MCF 10A (cell line): ENCODE measurements at regions of chr2 and their contacts with region 1.

Region 1: DNA sequence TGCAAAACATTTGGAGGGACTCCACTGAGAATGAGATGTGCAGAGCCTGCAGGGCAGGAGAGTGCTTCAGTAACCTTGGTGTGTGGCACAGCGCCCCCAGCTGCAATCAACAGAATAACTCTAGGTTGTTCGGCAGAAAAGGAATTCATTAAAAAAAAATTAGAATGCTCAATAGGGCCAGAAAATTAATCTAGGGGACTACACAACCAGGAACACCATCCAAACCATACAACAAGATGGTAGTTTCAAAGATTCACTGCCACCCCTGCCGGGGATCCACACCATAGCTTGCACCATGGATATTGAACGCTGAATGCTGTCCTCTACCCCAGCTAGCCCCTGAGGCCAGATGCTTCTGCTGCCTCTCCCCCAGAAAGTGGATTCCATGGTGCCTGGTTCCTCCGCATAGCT is 50.1 kb downstream of the THUMPD2 start:
- DNase-seq: peak; percentile 43
- H3K4me3 Mint-ChIP-seq: no peak overlapping the region
- H3K27ac Mint-ChIP-seq: no peak overlapping the region
- H3K4me1 Mint-ChIP-seq: peaks cover 3% of the 10 kb centered on the region
- H3K27me3 Mint-ChIP-seq: no peaks in the 10 kb centered on the region
- CTCF ChIP-seq: peak; percentile 69

Region 2: GRCh38 chr2:39513641-39514094 is 215.3 kb before region 1 on chr2:
- CTCF ChIA-PET with region 1: interaction called, 22 read pairs
- POLR2A ChIA-PET with region 1: no interaction called
- intact Hi-C with region 1: loop called (anchors 1 kb)
- DNase-seq: peak; percentile 92
- H3K4me3 Mint-ChIP-seq: no peak overlapping the region
- H3K27ac Mint-ChIP-seq: peak overlapping the region; percentile 90
- H3K4me1 Mint-ChIP-seq: peaks cover 30% of the 10 kb centered on the region
- H3K27me3 Mint-ChIP-seq: no peaks in the 10 kb centered on the region
- CTCF ChIP-seq: peak; percentile 55

Region 3: GRCh38 chr2:39593439-39594393 is 135.2 kb before region 1 on chr2:
- CTCF ChIA-PET with region 1: interaction called, 18 read pairs
- POLR2A ChIA-PET with region 1: no interaction called
- intact Hi-C with region 1: no loop called
- DNase-seq: peak; percentile 74
- H3K4me3 Mint-ChIP-seq: no peak overlapping the region
- H3K27ac Mint-ChIP-seq: peak overlapping the region; percentile 63
- H3K4me1 Mint-ChIP-seq: peaks cover 9% of the 10 kb centered on the region
- H3K27me3 Mint-ChIP-seq: no peaks in the 10 kb centered on the region
- CTCF ChIP-seq: peak; percentile 36

Region 4: DNA sequence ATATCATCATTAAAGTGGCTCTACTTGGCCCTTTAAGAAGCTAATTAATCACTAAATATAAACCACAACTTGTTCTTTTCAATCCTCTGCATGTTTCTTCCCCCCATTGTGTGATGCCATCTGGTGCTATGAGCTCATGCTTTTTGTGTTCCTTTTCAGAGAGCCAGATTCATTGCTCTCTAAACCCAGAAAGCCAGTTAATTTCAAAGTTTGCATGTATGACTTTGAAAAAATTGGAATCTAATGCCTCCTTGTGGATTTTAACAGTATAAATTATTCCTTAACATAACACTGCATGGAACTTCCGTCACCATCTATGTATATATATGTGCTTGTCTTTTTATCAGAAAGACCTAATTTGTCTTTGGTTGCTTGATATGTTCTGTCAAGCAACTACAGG is 32.1 kb before region 1 on chr2:
- CTCF ChIA-PET with region 1: interaction called, 13 read pairs
- POLR2A ChIA-PET with region 1: no interaction called
- intact Hi-C with region 1: no loop called
- DNase-seq: peak; percentile 25
- H3K4me3 Mint-ChIP-seq: no peak overlapping the region
- H3K27ac Mint-ChIP-seq: no peak overlapping the region
- H3K4me1 Mint-ChIP-seq: peaks cover 14% of the 10 kb centered on the region
- H3K27me3 Mint-ChIP-seq: no peaks in the 10 kb centered on the region
- CTCF ChIP-seq: peak; percentile 45

Region 5: DNA sequence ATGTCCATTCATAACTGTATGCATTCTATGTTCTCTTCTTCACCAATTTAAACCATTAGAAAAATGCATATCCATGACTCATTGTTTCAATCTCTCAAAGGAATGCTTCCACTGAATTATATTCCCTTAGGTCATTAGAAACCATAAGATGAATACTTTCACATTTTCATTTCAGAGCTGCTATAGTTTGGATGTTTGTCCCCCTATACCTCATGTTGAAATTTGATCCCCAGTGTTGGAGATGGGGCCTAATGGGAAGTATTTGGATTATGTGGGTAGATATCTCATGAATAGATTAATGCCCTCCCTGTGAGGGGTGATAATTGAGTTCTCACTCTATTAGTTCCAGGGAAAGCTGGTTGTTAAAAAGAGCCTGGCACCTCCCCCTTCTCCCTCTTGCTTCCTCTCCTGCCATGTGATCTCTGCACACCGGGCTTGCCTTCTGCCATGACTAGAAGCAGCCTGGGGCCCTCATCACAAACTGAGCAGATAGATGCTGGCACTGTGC is 14.4 kb after region 1 on chr2:
- CTCF ChIA-PET with region 1: interaction called, 22 read pairs
- POLR2A ChIA-PET with region 1: interaction called, 4 read pairs
- intact Hi-C with region 1: no loop called
- DNase-seq: peak; percentile 9
- H3K4me3 Mint-ChIP-seq: no peak overlapping the region
- H3K27ac Mint-ChIP-seq: peak overlapping the region; percentile 7
- H3K4me1 Mint-ChIP-seq: peaks cover 10% of the 10 kb centered on the region
- H3K27me3 Mint-ChIP-seq: no peaks in the 10 kb centered on the region
- CTCF ChIP-seq: no peak